CD4-positive, alpha-beta T cell (primary cell): ENCODE measurements at regions of chr3 and their contacts with region 1.

Region 1: GRCh38 chr3:155859859-155860258 is 5.6 kb upstream of the SLC33A1 start:
- DNase-seq: peak in 3 of 14 experiments; percentile 26 to 30 (median 26)
- ATAC-seq: no peak
- H3K4me3 ChIP-seq: no peak overlapping the region
- H3K4me3 Mint-ChIP-seq: no peak overlapping the region
- H3K27ac ChIP-seq: no peak overlapping the region
- H3K27ac Mint-ChIP-seq: no peak overlapping the region
- H3K4me1 ChIP-seq: peaks cover 20% of the 10 kb centered on the region
- H3K4me1 Mint-ChIP-seq: peaks cover 3% of the 10 kb centered on the region
- H3K27me3 ChIP-seq: no peaks in the 10 kb centered on the region
- H3K27me3 Mint-ChIP-seq: no peaks in the 10 kb centered on the region
- CTCF ChIP-seq: no peak

Region 2: GRCh38 chr3:155352900-155353490 is 506.9 kb before region 1 on chr3:
- CTCF ChIA-PET with region 1: no interaction called
- POLR2A ChIA-PET with region 1: no interaction called
- intact Hi-C with region 1: loop called in 1 of 2 experiments (anchors 10 kb)
- DNase-seq: peak in 3 of 14 experiments; percentile 18 to 25 (median 18)
- ATAC-seq: no peak
- H3K4me3 ChIP-seq: no peak overlapping the region
- H3K4me3 Mint-ChIP-seq: no peak overlapping the region
- H3K27ac ChIP-seq: no peak overlapping the region
- H3K27ac Mint-ChIP-seq: no peak overlapping the region
- H3K4me1 ChIP-seq: no peaks in the 10 kb centered on the region
- H3K4me1 Mint-ChIP-seq: no peaks in the 10 kb centered on the region
- H3K27me3 ChIP-seq: no peaks in the 10 kb centered on the region
- H3K27me3 Mint-ChIP-seq: no peaks in the 10 kb centered on the region
- CTCF ChIP-seq: peak; percentile 29

Region 3: DNA sequence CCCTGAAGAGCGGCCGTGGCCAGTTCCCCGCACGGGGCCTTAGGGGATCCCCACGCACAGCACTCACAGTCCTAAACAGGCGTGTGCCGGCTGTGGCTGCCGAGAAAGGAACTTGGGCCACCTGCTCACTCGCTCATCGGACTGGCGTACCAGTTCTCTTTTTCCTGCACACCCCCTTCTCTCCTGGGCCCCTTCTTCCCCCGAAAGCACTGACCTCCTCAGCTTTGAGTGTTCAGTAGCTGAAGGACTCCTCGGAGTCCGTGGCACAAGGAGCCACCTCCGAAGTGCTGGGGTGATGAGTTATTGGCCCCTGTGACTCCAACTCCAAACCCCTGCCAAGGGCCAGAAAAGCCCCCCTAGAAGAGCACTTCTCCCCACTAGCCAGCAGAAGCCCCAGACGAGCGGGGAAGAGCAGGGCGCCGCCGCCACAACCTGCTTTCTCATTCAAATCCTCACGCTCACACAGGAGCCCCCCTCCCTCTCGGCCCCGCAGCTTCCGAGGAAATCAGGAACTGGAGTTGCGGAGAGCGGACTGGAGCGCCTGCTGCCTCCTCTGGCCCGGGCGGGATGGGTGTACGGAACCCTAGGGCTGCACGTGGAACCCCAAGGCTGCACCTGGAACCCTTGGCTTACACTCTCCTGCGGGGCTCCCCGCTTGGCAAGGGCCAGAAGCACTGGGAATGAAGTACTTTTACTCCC is 115.1 kb before region 1 on chr3 and contains the start of gene PLCH1:
- CTCF ChIA-PET with region 1: no interaction called
- POLR2A ChIA-PET with region 1: interaction called, 3 read pairs
- intact Hi-C with region 1: loop called in 1 of 2 experiments (anchors 5 kb)
- DNase-seq: peak in 13 of 14 experiments; percentile 8 to 63 (median 34)
- ATAC-seq: peak; percentile 80
- H3K4me3 ChIP-seq: peak within 1 kb of the TSS; percentile 72
- H3K4me3 Mint-ChIP-seq: peak within 1 kb of the TSS; percentile 94
- H3K27ac ChIP-seq: no peak within 1 kb of the TSS
- H3K27ac Mint-ChIP-seq: peak within 1 kb of the TSS; percentile 60
- H3K4me1 ChIP-seq: peaks cover 23% of the 10 kb centered on the region
- H3K4me1 Mint-ChIP-seq: peaks cover 30% of the 10 kb centered on the region
- H3K27me3 ChIP-seq: peaks cover 20 to 33% of the 10 kb centered on the region in 2 experiments
- H3K27me3 Mint-ChIP-seq: peaks cover 54% of the 10 kb centered on the region
- CTCF ChIP-seq: no peak
- total RNA-seq, gene PLCH1: 0.03 to 0.20 TPM

Region 4: GRCh38 chr3:155753036-155753639 is 106.7 kb before region 1 on chr3:
- CTCF ChIA-PET with region 1: no interaction called
- POLR2A ChIA-PET with region 1: no interaction called
- intact Hi-C with region 1: loop called in 1 of 2 experiments (anchors 5 kb)
- DNase-seq: peak in 4 of 14 experiments; percentile 7 to 41 (median 34)
- ATAC-seq: no peak
- H3K4me3 ChIP-seq: no peak overlapping the region
- H3K4me3 Mint-ChIP-seq: no peak overlapping the region
- H3K27ac ChIP-seq: no peak overlapping the region
- H3K27ac Mint-ChIP-seq: no peak overlapping the region
- H3K4me1 ChIP-seq: no peaks in the 10 kb centered on the region
- H3K4me1 Mint-ChIP-seq: no peaks in the 10 kb centered on the region
- H3K27me3 ChIP-seq: no peaks in the 10 kb centered on the region
- H3K27me3 Mint-ChIP-seq: no peaks in the 10 kb centered on the region
- CTCF ChIP-seq: peak; percentile 43